ENCODE measurements at regions of chr7 and their contacts with region 1.

Region 1: DNA sequence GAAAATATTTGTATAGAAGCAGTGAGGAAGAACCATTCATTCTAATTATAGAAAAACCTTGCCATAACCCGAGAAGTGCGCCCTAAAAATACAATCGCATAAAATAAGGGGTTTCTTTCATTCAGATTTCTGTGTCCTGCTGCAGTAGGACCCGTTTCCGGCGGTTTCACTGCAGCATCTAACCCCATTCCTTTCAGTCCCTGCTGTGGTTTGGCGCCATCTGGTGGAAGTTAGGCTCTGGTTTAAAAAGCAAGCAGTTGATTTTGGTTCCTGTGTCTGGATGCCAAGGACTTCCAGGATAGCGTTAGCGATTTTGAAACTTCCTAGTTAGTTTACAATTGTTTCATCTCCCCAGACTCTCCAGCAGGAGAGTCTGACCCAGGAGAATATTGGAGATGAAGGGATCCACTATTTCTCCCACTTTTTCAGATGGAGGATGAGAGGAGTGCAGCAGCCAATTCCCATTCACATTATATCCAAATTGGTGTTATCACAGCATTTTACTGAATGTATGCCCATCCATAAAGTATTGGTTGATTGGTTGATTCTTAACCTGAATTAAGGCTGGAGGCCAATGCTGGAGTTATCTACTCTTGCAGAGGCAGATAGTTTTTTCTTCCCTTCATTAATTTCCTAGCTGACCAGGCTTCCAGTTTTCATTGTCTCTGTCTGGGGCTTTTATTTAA is 128.8 kb upstream of the CACNA2D1 start:
- DNase-seq: peak; percentile 80 to 83
- H3K4me3 ChIP-seq: no peak overlapping the region
- H3K4me3 Mint-ChIP-seq: no peak overlapping the region
- H3K27ac Mint-ChIP-seq: no peak overlapping the region
- H3K4me1 ChIP-seq: no peaks in the 10 kb centered on the region
- H3K4me1 Mint-ChIP-seq: no peaks in the 10 kb centered on the region
- H3K27me3 ChIP-seq: no peaks in the 10 kb centered on the region
- H3K27me3 Mint-ChIP-seq: peaks cover 17% of the 10 kb centered on the region
- CTCF ChIP-seq: peak; percentile 85 to 91

Region 2: DNA sequence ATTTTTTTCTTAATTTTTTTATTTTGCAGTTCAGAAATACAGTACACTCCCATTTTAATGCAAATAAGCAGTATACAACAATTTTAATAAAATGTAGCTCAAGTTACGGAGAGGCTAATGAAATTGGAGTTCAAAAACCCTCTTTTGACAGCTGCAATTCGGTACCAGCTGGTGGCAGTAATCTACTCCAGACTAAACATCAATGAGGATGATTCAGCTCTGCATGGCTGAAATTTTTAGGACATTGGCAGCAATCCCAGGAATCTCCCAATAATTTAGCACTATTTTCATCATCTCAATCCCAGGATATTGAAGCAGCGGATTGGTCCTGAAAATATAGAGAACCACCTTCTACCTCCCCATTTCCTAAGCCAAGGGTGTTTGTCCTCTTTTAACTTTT is 407.5 kb before region 1 on chr7:
- CTCF ChIA-PET with region 1: no interaction called
- POLR2A ChIA-PET with region 1: no interaction called
- intact Hi-C with region 1: loop called (anchors 10 kb)
- DNase-seq: no peak
- H3K4me3 ChIP-seq: no peak overlapping the region
- H3K4me3 Mint-ChIP-seq: no peak overlapping the region
- H3K27ac Mint-ChIP-seq: no peak overlapping the region
- H3K4me1 ChIP-seq: no peaks in the 10 kb centered on the region
- H3K4me1 Mint-ChIP-seq: no peaks in the 10 kb centered on the region
- H3K27me3 ChIP-seq: no peaks in the 10 kb centered on the region
- H3K27me3 Mint-ChIP-seq: no peaks in the 10 kb centered on the region
- CTCF ChIP-seq: peak in 1 of 2 experiments; percentile 4

Region 3: DNA sequence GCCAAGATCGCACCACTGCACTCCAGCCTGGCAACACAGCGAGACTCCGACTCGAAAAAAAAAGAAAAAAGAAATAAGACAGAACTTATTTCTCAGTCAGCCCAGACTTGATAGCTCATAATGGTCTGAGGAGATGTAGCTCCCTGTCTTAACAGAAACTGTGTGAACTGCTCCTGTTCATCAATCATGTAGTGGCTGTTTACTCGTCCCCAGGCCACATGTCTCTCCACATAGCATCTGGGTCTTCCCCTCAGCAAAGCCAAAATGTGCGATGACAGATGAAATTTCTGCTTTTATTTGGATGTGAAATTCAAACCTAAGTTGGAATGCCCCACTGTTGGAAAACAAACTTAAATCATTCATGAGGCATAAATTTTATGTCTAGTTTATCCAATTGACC is 347.8 kb before region 1 on chr7:
- CTCF ChIA-PET with region 1: no interaction called
- POLR2A ChIA-PET with region 1: no interaction called
- intact Hi-C with region 1: no loop called
- DNase-seq: no peak
- H3K4me3 ChIP-seq: no peak overlapping the region
- H3K4me3 Mint-ChIP-seq: no peak overlapping the region
- H3K27ac Mint-ChIP-seq: no peak overlapping the region
- H3K4me1 ChIP-seq: no peaks in the 10 kb centered on the region
- H3K4me1 Mint-ChIP-seq: no peaks in the 10 kb centered on the region
- H3K27me3 ChIP-seq: no peaks in the 10 kb centered on the region
- H3K27me3 Mint-ChIP-seq: no peaks in the 10 kb centered on the region
- CTCF ChIP-seq: no peak

Region 4: DNA sequence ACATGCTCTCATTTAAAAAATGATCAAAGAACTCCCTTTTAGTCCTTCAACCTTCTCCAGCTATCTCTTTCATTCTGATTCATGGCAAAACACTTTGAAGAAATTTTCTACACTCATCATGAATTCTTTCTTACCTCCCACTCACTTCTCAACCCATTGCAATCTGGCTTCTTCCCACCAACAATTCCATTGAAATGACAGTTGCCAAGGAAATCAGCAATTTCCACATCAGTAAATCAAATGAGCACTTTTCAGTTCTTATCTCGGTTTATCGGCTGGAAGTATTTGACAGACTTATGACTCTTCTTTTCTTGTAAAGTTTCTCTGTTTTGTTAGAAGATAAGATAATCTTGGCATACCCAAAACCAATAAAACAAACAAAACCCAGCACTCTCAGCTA is 29.7 kb before region 1 on chr7:
- CTCF ChIA-PET with region 1: no interaction called
- POLR2A ChIA-PET with region 1: no interaction called
- intact Hi-C with region 1: no loop called
- DNase-seq: no peak
- H3K4me3 ChIP-seq: no peak overlapping the region
- H3K4me3 Mint-ChIP-seq: no peak overlapping the region
- H3K27ac Mint-ChIP-seq: no peak overlapping the region
- H3K4me1 ChIP-seq: no peaks in the 10 kb centered on the region
- H3K4me1 Mint-ChIP-seq: peaks cover 6% of the 10 kb centered on the region
- H3K27me3 ChIP-seq: no peaks in the 10 kb centered on the region
- H3K27me3 Mint-ChIP-seq: peaks cover 2% of the 10 kb centered on the region
- CTCF ChIP-seq: no peak

Region 5: DNA sequence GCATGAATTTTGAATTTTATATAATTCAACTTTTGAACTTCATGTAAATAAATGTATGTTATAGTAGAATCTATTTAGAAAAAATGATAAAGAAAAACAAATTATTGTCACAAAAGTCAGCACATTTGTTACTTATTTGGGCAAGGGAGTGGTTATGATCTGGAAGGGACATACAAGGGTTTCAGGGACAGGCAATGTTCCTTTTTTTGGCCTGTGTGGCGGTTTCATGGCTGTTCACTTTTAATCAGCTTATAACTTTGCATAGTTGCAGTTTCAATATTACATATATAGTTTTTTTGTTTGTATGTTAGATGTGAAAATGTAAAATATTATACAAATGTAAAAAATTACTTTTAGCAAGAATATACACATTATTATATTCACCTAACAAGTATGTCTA is 334.2 kb after region 1 on chr7:
- CTCF ChIA-PET with region 1: no interaction called
- POLR2A ChIA-PET with region 1: no interaction called
- intact Hi-C with region 1: no loop called
- DNase-seq: no peak
- H3K4me3 ChIP-seq: no peak overlapping the region
- H3K4me3 Mint-ChIP-seq: no peak overlapping the region
- H3K27ac Mint-ChIP-seq: no peak overlapping the region
- H3K4me1 ChIP-seq: no peaks in the 10 kb centered on the region
- H3K4me1 Mint-ChIP-seq: no peaks in the 10 kb centered on the region
- H3K27me3 ChIP-seq: no peaks in the 10 kb centered on the region
- H3K27me3 Mint-ChIP-seq: no peaks in the 10 kb centered on the region
- CTCF ChIP-seq: no peak

Measured in Caco-2 (cell line).